Transverse colon (tissue), 4 donors: ENCODE measurements at regions of chr19 and their contacts with region 1.

Region 1: GRCh38 chr19:41273076-41273475 is 8.9 kb downstream of the HNRNPUL1 start:
- DNase-seq: no peak
- H3K4me3 ChIP-seq: no peak overlapping the region
- H3K27ac ChIP-seq: no peak overlapping the region
- H3K4me1 ChIP-seq: no peaks in the 10 kb centered on the region
- H3K27me3 ChIP-seq: no peaks in the 10 kb centered on the region
- CTCF ChIP-seq: no peak
- EP300 ChIP-seq: no peak
- POLR2A ChIP-seq: no peak

Region 2: GRCh38 chr19:41233748-41234240 is 39.3 kb before region 1 on chr19:
- in situ Hi-C with region 1: no loop called
- intact Hi-C with region 1: no loop called
- DNase-seq: peak; percentile 21
- H3K4me3 ChIP-seq: no peak overlapping the region
- H3K27ac ChIP-seq: no peak overlapping the region
- H3K4me1 ChIP-seq: no peaks in the 10 kb centered on the region
- H3K27me3 ChIP-seq: no peaks in the 10 kb centered on the region
- CTCF ChIP-seq: no peak
- EP300 ChIP-seq: no peak
- POLR2A ChIP-seq: no peak

Region 3: GRCh38 chr19:41308392-41309179 is 35.5 kb after region 1 on chr19:
- in situ Hi-C with region 1: no loop called
- intact Hi-C with region 1: loop called (anchors 5 kb)
- DNase-seq: peak; percentile 97
- H3K4me3 ChIP-seq: peak overlapping the region in 1 of 4 donors; percentile 60
- H3K27ac ChIP-seq: peak overlapping the region; percentile 91 to 96 (median 93)
- H3K4me1 ChIP-seq: peaks cover 22 to 61% (median 34%) of the 10 kb centered on the region in 4 donors
- H3K27me3 ChIP-seq: no peaks in the 10 kb centered on the region
- CTCF ChIP-seq: peak; percentile 98 to 99 (median 99)
- EP300 ChIP-seq: no peak
- POLR2A ChIP-seq: peak; percentile 22